Astrocyte of the cerebellum (primary cell): ENCODE measurements at regions of chr20 and their contacts with region 1.

Region 1: DNA sequence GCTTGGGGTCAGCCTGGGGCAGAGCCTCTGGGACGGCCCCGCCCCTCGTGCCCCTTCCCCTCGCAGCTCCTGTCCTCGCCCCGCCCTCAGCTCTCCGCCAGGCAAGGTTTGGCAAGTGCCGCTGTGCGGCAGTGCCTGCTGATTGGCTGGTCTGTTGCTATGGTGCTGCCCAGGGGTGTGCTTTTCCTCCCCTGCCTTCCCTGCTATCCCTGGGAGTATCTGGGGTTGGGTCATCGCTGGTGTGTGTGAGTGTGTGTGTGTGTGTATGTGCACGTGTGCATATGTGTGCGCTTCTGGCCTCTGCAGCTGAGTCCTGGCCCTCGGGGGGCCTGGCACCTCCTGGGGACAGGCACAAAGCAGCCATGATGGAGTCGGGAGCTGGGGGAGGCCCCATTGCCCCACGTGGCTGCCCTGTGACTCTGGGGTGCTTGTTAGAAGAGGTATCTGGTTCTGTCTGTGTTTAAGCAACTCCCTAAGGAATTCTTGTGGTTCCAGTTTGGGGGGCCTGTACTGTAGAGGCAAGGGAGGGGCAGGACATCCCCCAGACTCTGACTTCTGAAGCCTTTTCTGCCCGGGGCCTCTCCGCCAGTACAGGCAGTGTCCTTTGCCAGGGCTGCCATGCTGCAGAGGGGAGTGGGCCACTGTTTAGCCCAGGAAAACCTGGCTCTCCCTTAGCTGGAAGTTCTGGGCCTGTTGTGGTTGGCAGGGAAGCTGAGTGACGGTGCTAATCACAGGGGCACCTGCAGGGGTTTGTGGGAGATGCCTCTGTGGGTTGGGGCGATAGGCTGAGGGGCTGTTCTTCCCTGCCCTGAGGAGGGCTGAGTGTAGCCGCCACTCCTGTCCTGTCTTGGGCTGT is 7.0 kb downstream of the RTEL1 start:
- DNase-seq: no peak
- H3K4me3 ChIP-seq: no peak overlapping the region
- CTCF ChIP-seq: no peak

Region 2: DNA sequence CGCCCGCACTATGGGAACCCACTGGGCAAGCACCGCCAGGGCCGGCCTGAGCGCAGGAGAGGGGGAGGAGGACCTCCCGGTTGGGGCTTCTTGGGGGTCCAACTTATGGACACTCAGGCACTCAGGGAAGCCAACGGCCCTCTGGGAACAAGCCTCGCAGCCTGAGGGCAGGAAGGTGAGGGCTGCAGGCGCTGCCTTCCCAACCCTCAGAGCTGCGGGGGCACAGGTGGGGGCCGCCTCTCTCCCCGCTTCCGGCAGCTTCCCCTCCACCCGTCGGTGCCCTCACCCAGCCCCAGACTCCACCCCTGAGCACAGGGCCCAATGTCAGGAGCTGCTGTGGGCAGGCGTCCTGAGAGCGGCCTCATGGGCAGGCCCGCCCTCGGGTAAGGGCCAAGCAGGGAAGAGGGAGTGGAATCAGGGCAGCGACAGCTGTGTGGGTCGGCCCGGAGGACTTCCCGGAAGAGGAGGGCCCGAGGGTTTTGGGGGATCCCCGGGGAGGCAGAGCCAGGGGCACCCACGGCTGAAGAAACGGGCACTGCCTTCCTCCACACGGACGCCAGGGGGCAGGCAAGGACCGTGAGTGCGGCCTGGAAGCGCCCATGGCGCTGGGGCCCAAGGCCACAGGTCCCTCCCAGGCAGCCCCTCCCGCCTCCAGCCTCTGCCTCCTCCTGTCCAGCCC is 127.4 kb before region 1 on chr20:
- in situ Hi-C with region 1: loop called (anchors 10 kb)
- DNase-seq: peak; percentile 51
- H3K4me3 ChIP-seq: peak overlapping the region; percentile 12
- CTCF ChIP-seq: peak; percentile 81

Region 3: GRCh38 chr20:63698739-63699465 is 33.8 kb after region 1 on chr20:
- in situ Hi-C with region 1: loop called (anchors 5 kb)
- DNase-seq: peak; percentile 66
- H3K4me3 ChIP-seq: peak overlapping the region; percentile 6
- CTCF ChIP-seq: no peak